ENCODE measurements at regions of chr11 and their contacts with region 1.

Region 1: GRCh38 chr11:59171508-59172322 is at the start of gene DTX4:
- DNase-seq: peak in 1 of 2 donors; percentile 95
- H3K4me3 ChIP-seq: peak within 1 kb of the TSS; percentile 53 to 90
- H3K27ac ChIP-seq: peak within 1 kb of the TSS; percentile 76
- H3K4me1 ChIP-seq: peaks cover 24% of the 10 kb centered on the region
- H3K27me3 ChIP-seq: no peaks in the 10 kb centered on the region
- CTCF ChIP-seq: peak; percentile 87 to 96 (median 91)
- POLR2A ChIP-seq: peak in 1 of 2 donors; percentile 7
- total RNA-seq, gene DTX4: 8.1 TPM

Region 2: DNA sequence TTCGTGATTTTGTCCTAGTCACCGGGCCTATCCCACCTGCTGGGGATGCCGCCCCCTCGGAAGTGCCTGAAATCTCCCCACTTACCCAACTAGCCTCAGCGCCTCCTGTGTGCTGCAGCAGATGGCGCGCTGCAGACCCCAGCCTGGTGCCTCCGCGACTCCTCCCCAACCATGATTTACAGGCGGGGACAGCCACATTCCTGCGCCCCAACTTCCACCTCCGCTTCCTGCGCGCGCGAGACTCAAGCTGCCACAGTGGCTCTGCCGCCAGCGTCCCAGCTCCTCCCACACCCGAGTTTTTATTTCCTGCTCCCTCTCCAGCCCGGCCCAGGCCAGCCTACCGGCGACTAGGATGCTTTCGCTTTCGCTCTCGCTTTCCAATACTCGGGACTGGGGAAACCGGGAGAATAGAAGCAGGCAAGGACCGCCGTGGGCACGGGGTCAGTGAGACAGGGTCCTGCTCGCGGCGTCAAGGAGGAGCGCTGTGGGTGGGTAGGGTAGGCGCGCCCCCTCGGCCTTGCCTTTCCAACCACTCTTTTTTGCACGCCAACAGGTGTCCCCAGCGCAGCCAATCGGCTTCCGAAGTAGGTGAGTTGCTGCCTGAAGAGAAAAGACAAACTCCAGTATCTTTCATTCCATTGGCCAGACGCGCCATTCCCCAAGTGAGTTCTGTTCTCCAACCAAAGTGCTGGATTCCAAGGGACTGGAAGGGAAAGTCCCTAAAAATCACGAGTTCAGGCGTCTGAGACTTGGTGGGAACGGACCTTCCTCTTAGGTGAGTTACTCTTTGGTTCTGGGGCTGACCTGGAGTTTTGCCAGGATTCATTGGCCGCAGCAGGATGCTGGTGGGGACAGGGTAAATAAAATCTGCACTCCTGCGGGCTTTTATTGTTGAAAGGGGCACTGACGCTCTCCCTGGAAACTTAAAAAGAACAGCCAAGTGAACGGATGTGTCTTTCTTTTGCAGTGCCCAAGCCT is 28.9 kb before region 1 on chr11 and contains the start of gene FAM111A:
- intact Hi-C with region 1: no loop called
- DNase-seq: no peak
- H3K4me3 ChIP-seq: peak within 1 kb of the TSS; percentile 75 to 79
- H3K27ac ChIP-seq: peak within 1 kb of the TSS; percentile 95
- H3K4me1 ChIP-seq: peaks cover 16% of the 10 kb centered on the region
- H3K27me3 ChIP-seq: no peaks in the 10 kb centered on the region
- CTCF ChIP-seq: no peak
- POLR2A ChIP-seq: peak in 1 of 2 donors; percentile 11
- total RNA-seq, gene FAM111A: 51.8 TPM

Region 3: DNA sequence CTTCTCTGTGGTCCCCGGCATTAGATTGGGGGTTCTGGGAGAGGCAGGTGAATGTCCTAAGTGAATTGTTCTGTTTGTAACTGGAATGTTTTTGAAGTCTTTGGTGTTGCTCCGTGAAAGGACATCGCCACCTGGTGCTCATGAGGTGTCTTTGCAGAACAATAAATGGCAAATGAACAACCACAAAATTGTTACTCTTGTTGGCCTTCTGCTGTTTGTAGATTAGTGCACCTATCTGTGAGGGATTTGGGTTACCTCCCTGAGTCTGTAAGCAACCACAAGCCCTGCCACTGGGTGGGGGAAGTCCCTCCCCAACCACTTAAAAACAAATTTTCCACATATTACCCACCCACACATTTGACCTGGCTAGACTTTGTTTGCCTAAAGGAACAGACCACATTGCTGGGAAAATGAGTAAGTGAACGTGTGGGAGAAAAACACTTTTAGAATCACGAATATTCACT is 36.3 kb after region 1 on chr11:
- intact Hi-C with region 1: loop called (anchors 1 kb)
- DNase-seq: no peak
- H3K4me3 ChIP-seq: no peak overlapping the region
- H3K27ac ChIP-seq: no peak overlapping the region
- H3K4me1 ChIP-seq: no peaks in the 10 kb centered on the region
- H3K27me3 ChIP-seq: no peaks in the 10 kb centered on the region
- CTCF ChIP-seq: peak; percentile 50 to 62 (median 51)
- POLR2A ChIP-seq: no peak

Region 4: GRCh38 chr11:59283825-59284772 is 112.4 kb after region 1 on chr11:
- intact Hi-C with region 1: loop called (anchors 5 kb)
- DNase-seq: peak in 1 of 2 donors; percentile 34
- H3K4me3 ChIP-seq: no peak overlapping the region
- H3K27ac ChIP-seq: no peak overlapping the region
- H3K4me1 ChIP-seq: no peaks in the 10 kb centered on the region
- H3K27me3 ChIP-seq: no peaks in the 10 kb centered on the region
- CTCF ChIP-seq: peak; percentile 56 to 66 (median 59)
- POLR2A ChIP-seq: no peak